CD8-positive, alpha-beta T cell (primary cell): ENCODE measurements at regions of chr6 and their contacts with region 1.

Region 1: DNA sequence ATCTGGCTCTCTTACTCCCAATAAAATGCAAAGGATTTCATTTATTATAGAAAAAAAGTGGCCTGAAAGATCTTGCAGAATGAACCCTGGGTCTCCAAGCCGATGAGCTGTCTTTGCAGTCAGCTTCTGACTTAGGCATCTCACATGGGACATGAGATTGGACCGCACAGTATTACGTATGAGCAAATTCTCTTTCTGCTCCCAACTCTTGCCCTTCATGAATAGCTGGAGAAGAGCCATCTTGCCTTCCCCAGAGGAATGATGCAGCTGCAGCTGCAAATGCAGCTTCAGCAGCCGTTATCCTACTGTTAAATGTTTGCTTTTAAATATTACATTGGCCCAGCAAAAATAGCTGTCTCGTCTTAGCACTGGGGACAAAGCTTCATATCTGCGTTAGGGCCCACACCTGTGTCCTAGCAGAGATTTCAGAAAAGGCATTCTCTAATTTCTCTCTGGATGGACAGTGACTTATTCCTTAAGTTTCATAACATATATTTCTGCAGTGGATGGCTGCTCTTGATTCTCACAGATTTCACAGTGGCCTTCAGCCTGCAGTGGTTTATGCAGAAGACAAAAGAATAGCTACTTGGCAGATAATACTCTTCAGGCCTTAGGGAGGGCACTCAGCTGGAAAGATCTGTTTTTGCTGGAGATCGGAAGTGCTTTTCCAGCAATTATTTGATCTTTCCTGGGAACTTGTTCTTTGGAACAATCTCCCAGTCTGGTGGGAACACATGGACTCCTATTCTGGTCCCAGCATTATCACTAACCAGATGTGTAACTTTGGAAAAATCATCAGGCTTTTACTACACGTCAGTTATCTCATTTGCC is 129.2 kb downstream of the FYN start:
- DNase-seq: no peak
- ATAC-seq: no peak
- H3K4me3 ChIP-seq: no peak overlapping the region
- H3K4me3 Mint-ChIP-seq: no peak overlapping the region
- H3K27ac ChIP-seq: no peak overlapping the region
- H3K27ac Mint-ChIP-seq: peak overlapping the region; percentile 82
- H3K4me1 ChIP-seq: peaks cover 77% of the 10 kb centered on the region
- H3K4me1 Mint-ChIP-seq: peaks cover 95% of the 10 kb centered on the region
- H3K27me3 ChIP-seq: no peaks in the 10 kb centered on the region
- H3K27me3 Mint-ChIP-seq: no peaks in the 10 kb centered on the region
- CTCF ChIP-seq: no peak

Region 2: GRCh38 chr6:111087106-111087835 is 656.8 kb before region 1 on chr6 and contains the start of gene SLC16A10:
- CTCF ChIA-PET with region 1: no interaction called
- POLR2A ChIA-PET with region 1: no interaction called
- intact Hi-C with region 1: no loop called
- DNase-seq: peak; percentile 70 to 92 (median 83)
- ATAC-seq: peak; percentile 86
- H3K4me3 ChIP-seq: peak within 1 kb of the TSS; percentile 56 to 70
- H3K4me3 Mint-ChIP-seq: peak within 1 kb of the TSS; percentile 96
- H3K27ac ChIP-seq: peak within 1 kb of the TSS; percentile 44 to 55
- H3K27ac Mint-ChIP-seq: peak within 1 kb of the TSS; percentile 96
- H3K4me1 ChIP-seq: peaks cover 25% of the 10 kb centered on the region
- H3K4me1 Mint-ChIP-seq: peaks cover 46% of the 10 kb centered on the region
- H3K27me3 ChIP-seq: no peaks in the 10 kb centered on the region
- H3K27me3 Mint-ChIP-seq: peaks cover 2% of the 10 kb centered on the region
- CTCF ChIP-seq: no peak
- total RNA-seq, gene SLC16A10: 15.7 to 18.5 TPM

Region 3: DNA sequence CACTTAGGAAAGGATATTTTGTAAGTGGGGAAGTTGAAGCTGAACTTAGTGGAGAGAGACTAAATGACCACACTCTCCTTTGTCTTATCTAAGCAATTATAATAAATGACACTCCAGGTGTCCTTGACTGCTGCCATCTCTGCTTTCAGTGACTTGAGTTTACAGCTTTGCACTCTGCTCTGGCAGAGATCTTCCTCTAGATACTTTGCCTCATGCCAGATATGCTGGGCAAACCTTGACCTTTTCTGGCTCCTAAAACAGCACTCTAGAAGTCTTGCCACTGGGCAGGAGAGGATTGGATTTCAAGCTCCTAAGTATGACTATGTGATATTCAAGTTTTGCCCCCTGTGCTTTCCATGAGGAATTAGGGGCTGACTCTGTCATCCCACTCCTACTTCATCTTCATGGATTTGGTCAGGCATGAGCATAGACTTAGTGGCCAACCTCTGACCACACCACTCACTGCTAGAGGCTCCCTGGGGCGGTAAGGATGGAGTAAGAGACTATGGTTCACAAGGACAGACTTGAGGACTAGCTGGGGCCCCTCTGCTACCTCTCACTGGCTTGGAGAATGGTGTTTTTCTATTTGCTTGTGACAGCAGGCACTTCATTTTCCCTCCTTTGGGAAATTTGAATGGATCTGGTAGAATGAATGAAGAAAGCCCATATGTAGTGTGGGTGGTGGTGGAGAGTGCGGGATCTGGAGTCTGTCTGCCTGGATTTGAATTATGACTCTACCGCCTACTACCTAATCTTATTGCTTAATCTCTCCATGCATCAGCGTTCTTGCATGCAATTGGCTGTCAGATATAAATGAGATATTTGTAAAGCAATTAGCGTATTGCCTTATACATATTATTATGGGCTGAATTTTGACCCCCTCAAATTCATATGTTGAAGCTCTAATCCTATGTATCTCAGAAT is 452.5 kb before region 1 on chr6:
- CTCF ChIA-PET with region 1: no interaction called
- POLR2A ChIA-PET with region 1: no interaction called
- intact Hi-C with region 1: no loop called
- DNase-seq: no peak
- ATAC-seq: no peak
- H3K4me3 ChIP-seq: no peak overlapping the region
- H3K4me3 Mint-ChIP-seq: no peak overlapping the region
- H3K27ac ChIP-seq: no peak overlapping the region
- H3K27ac Mint-ChIP-seq: no peak overlapping the region
- H3K4me1 ChIP-seq: peaks cover 7% of the 10 kb centered on the region
- H3K4me1 Mint-ChIP-seq: peaks cover 13% of the 10 kb centered on the region
- H3K27me3 ChIP-seq: no peaks in the 10 kb centered on the region
- H3K27me3 Mint-ChIP-seq: no peaks in the 10 kb centered on the region
- CTCF ChIP-seq: no peak

Region 4: DNA sequence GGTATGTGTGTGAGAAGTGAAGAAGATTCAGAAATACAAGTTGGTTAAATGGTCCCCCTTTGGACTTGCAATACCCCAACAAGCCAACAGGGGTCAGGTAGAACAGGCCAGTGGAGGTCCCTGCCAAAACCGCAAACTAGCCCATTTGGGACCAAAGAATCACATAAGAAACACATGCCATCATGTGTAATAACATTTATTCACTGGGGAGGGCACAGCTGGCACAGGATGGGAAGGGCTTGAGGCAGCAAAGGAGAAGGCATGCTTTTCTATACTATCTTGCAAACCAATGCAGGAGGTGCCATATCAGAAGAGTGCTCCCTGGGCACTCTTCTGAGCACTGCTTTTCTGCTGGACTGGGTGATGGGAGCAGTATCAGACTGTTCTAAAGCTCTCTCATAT is 22.3 kb before region 1 on chr6:
- CTCF ChIA-PET with region 1: interaction called, 5 read pairs
- POLR2A ChIA-PET with region 1: interaction called, 3 read pairs
- intact Hi-C with region 1: loop called (anchors 2 kb)
- DNase-seq: peak in 7 of 9 experiments; percentile 21 to 74 (median 58)
- ATAC-seq: peak; percentile 39
- H3K4me3 ChIP-seq: no peak overlapping the region
- H3K4me3 Mint-ChIP-seq: no peak overlapping the region
- H3K27ac ChIP-seq: peak overlapping the region in 1 of 2 experiments; percentile 72
- H3K27ac Mint-ChIP-seq: peak overlapping the region; percentile 83
- H3K4me1 ChIP-seq: peaks cover 46% of the 10 kb centered on the region
- H3K4me1 Mint-ChIP-seq: peaks cover 86% of the 10 kb centered on the region
- H3K27me3 ChIP-seq: no peaks in the 10 kb centered on the region
- H3K27me3 Mint-ChIP-seq: no peaks in the 10 kb centered on the region
- CTCF ChIP-seq: peak; percentile 66

Region 5: GRCh38 chr6:111727802-111728201 is 16.3 kb before region 1 on chr6:
- CTCF ChIA-PET with region 1: interaction called, 5 read pairs
- POLR2A ChIA-PET with region 1: interaction called, 3 read pairs
- intact Hi-C with region 1: loop called (anchors 2 kb)
- DNase-seq: peak in 1 of 9 experiments; percentile 53
- ATAC-seq: no peak
- H3K4me3 ChIP-seq: no peak overlapping the region
- H3K4me3 Mint-ChIP-seq: no peak overlapping the region
- H3K27ac ChIP-seq: peak overlapping the region in 1 of 2 experiments; percentile 47
- H3K27ac Mint-ChIP-seq: no peak overlapping the region
- H3K4me1 ChIP-seq: peaks cover 51% of the 10 kb centered on the region
- H3K4me1 Mint-ChIP-seq: peaks cover 90% of the 10 kb centered on the region
- H3K27me3 ChIP-seq: no peaks in the 10 kb centered on the region
- H3K27me3 Mint-ChIP-seq: no peaks in the 10 kb centered on the region
- CTCF ChIP-seq: peak; percentile 27

Region 6: DNA sequence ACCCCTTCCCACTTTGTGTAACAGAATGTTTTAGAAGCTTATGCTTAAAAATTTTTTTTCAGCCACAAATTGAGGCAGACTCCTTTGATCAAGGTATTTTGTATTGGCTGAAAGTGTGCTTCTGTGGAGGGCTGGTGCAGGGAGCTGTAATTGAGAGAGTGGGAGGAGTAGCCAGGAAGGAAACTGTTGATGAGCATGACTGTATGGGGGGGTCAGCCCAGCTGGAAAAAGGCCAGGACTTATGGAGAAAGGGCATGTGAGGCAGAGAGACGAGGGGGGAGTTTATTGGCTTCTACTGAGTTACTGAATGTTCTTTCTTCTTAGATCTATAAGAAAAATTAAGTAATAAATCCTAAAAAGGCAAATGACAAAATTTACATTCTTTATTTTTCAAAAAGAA is 616.4 kb after region 1 on chr6:
- CTCF ChIA-PET with region 1: no interaction called
- POLR2A ChIA-PET with region 1: no interaction called
- intact Hi-C with region 1: no loop called
- DNase-seq: no peak
- ATAC-seq: no peak
- H3K4me3 ChIP-seq: no peak overlapping the region
- H3K4me3 Mint-ChIP-seq: no peak overlapping the region
- H3K27ac ChIP-seq: no peak overlapping the region
- H3K27ac Mint-ChIP-seq: no peak overlapping the region
- H3K4me1 ChIP-seq: no peaks in the 10 kb centered on the region
- H3K4me1 Mint-ChIP-seq: no peaks in the 10 kb centered on the region
- H3K27me3 ChIP-seq: peaks cover 0 to 5% of the 10 kb centered on the region in 2 experiments
- H3K27me3 Mint-ChIP-seq: peaks cover 13% of the 10 kb centered on the region
- CTCF ChIP-seq: no peak